Adrenal gland (tissue), 19 donors: ENCODE measurements at regions of chr13 and their contacts with region 1.

Region 1: DNA sequence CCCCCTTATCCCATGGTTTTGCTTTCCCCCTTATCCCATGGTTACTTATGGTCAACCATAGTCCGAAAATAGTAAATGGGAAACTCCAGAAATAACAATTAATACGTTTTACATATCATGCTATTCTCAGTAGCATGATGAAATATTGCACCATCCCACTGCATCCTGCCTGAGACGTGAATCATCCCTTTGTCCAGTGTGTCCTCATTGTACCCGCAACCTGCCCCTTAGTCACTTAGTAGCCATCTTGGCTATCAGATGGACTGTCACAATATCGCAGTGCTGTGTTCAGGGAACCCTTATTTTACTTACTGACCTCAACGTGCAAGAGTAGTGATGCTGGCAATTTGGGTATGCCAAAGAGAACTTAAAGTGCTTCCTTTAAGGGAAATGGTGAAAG is 10.5 kb upstream of the NBEA start:
- DNase-seq: no peak
- H3K4me3 ChIP-seq: no peak overlapping the region
- H3K27ac ChIP-seq: no peak overlapping the region
- H3K4me1 ChIP-seq: no peaks in the 10 kb centered on the region
- H3K27me3 ChIP-seq: no peaks in the 10 kb centered on the region
- CTCF ChIP-seq: no peak
- POLR2A ChIP-seq: no peak

Region 2: DNA sequence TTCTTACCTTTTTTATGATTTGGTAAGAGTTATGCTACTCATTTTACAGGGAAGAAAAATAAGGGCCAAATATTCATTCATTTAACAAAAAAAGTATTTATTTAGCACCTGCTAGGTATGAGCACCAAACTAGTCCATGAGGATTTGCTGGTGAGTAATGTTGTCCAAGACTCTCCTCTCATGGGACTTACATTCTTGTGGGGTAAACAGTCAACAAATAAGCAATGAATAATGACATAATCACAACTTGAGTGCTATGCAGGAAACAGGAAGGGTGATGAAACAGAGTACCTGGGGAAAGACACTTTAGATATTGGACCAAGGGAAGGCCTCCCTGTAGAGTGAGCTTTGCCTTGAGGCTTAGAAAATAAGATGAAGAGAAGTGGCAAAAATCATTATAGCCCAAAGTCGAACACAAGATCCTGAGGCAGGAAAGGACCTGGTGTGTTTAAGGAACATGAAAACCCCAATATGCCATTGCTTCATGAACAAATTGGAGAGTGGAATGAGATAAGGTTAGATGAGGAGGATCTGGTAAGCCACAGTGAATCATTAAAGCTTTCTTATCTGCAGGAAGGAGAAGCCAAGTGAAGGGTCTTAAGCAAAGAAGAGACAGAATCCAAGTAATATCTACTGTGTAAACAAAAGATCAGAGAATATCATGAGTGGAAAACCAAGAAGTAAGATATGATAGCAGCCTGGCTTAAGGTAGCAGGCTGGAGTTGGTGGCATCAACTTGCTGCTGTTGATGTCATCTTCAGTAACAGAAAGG is 284.0 kb before region 1 on chr13:
- intact Hi-C with region 1: no loop called
- DNase-seq: no peak
- H3K4me3 ChIP-seq: no peak overlapping the region
- H3K27ac ChIP-seq: no peak overlapping the region
- H3K4me1 ChIP-seq: no peaks in the 10 kb centered on the region
- H3K27me3 ChIP-seq: no peaks in the 10 kb centered on the region
- CTCF ChIP-seq: no peak
- POLR2A ChIP-seq: no peak

Region 3: DNA sequence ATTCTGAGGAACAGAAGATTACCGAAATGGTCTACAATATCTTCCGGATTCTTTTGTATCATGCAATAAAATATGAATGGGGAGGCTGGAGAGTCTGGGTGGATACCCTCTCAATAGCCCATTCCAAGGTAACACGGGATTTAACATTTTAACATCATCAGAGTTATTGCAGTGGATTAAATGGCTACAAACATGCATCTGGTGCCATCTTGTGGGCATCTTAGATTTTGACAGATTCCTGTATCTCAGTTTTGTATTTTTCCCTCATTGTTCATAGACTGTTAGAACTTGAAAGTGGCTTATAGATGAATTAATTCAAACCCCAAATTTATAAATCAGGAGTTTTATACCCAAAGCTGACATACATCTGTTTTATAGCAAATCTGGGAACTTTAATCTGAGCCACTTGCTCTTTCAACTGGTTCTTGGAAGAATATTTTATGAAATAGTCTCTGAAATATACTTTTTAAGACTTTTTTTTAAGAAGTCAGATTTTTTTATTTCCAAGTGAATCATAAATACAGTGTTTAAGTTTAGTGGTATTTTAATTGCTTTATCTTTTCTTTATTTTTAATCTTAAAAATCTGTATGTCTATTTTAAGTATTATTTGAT is 225.7 kb after region 1 on chr13:
- intact Hi-C with region 1: loop called in 1 of 2 experiments (anchors 10 kb)
- DNase-seq: peak in 5 of 7 donors; percentile 23 to 61 (median 53)
- H3K4me3 ChIP-seq: no peak overlapping the region
- H3K27ac ChIP-seq: no peak overlapping the region
- H3K4me1 ChIP-seq: peaks cover 0 to 3% of the 10 kb centered on the region in 2 donors
- H3K27me3 ChIP-seq: no peaks in the 10 kb centered on the region
- CTCF ChIP-seq: peak; percentile 33 to 85 (median 75)
- POLR2A ChIP-seq: no peak